Ovary (tissue), 10 donors: ENCODE measurements at regions of chr9 and their contacts with region 1.

Region 1: DNA sequence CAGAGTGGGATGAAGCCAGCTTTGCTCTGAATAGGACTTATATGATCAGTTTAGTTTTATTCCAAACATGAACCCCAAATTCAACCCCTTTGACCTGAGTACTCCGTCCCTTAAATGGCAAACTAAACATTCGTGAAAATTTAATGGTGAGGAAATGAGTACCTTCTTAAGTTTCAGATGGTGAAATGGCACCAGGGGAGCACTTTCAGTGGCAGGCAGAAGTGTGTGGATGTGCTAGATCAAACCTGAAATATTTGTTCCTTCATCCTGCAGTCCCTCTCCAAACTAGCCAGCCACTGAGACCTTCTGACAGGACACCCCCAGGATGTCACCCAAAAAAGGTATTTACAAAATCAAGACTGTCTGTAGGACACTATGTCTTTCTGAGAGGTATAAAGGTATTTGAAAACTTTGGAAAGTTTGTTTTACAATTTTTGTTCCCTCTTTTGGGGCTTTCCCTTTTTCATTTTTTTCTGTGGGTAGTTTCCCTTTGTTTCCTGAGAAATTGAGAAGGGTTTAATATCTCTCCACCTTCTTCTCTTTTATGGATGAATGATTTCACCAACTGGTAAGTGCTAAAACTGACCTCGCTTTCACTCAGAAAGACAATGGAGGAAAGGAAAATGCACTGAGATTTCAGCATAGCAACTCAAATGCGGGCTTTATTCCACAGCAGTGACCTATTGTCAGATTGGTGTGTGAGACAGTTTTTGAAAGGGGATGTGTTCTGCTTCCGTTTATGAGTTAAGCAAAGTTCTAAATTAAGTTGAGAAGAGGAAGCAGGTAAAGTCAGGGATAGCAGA is 127.1 kb downstream of the TMC1 start:
- DNase-seq: no peak
- H3K4me3 ChIP-seq: no peak overlapping the region
- H3K27ac ChIP-seq: no peak overlapping the region
- H3K4me1 ChIP-seq: no peaks in the 10 kb centered on the region
- H3K27me3 ChIP-seq: no peaks in the 10 kb centered on the region
- CTCF ChIP-seq: no peak
- EP300 ChIP-seq: no peak
- POLR2A ChIP-seq: no peak

Region 2: GRCh38 chr9:72680593-72681282 is 32.2 kb after region 1 on chr9:
- intact Hi-C with region 1: no loop called
- DNase-seq: no peak
- H3K4me3 ChIP-seq: no peak overlapping the region
- H3K27ac ChIP-seq: no peak overlapping the region
- H3K4me1 ChIP-seq: no peaks in the 10 kb centered on the region
- H3K27me3 ChIP-seq: no peaks in the 10 kb centered on the region
- CTCF ChIP-seq: no peak
- EP300 ChIP-seq: no peak
- POLR2A ChIP-seq: no peak

Region 3: DNA sequence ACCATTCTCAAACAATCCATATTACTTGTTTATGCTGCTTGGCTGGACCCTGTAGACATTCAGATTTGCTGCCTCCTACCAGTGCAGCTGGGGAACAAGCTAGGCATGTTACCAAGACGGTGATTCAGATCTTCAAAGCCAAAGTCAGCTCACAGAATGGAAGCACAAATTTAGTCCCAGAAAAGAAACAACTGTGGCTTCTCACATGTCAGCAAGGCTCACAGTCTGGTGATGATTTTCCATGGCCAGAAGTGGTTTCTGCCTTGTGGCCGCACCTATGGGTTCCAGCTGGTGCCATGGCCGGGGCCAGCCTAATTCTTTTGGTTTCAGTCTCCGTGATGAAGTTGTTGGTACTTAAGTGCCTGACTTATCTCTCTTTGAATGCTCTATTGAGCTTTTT is 55.0 kb after region 1 on chr9:
- intact Hi-C with region 1: loop called in 1 of 4 experiments (anchors 10 kb)
- DNase-seq: no peak
- H3K4me3 ChIP-seq: no peak overlapping the region
- H3K27ac ChIP-seq: no peak overlapping the region
- H3K4me1 ChIP-seq: no peaks in the 10 kb centered on the region
- H3K27me3 ChIP-seq: no peaks in the 10 kb centered on the region
- CTCF ChIP-seq: no peak
- EP300 ChIP-seq: no peak
- POLR2A ChIP-seq: no peak